Common myeloid progenitor, CD34-positive (primary cell): ENCODE measurements at regions of chr1 and their contacts with region 1.

Region 1: DNA sequence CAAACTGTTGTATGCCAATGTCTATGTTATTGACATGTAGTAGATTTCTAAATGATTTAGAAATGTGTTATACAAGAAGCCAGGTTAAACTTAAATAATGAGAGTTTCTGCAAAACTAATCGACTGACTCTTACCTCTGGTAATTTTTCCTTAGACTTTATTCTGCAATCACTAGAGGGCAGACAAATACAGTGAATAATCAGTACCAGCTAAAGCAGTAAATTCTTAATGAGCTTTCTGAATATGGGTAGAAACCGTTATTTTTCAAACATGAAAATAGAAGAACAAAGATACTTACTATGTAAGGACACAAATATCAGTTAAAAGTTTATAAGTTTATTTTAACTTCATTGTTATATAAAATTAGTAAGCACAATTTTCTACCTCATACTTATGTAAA is 97.9 kb upstream of the RGS1 start:
- DNase-seq: peak; percentile 45 to 73 (median 67)
- H3K4me3 ChIP-seq: no peak overlapping the region
- H3K27ac ChIP-seq: no peak overlapping the region
- H3K4me1 ChIP-seq: no peaks in the 10 kb centered on the region
- H3K27me3 ChIP-seq: no peaks in the 10 kb centered on the region

Region 2: DNA sequence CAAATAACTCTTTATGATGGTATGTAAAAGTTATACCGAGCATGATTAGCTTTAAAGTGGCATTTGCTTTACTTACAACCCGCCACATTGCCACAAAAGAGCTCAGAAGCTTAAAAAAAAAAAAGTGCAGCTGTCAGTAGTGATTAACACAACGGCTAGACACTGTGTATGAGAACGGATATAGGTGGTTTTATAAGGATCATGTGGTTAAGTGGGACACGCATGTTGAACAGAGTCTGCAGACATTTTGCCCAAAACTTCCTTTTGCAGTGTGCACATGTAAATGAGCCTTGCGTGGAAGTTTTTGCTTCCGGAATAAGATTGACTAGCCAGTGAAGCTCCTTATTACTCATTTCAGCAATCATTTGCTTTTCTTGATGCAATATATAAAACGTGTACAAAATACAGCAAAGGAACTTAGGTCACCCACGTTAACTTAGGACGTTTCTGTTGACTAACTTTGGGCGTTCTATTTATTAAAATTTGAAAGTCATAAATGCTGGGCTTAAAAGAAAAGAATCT is 39.2 kb after region 1 on chr1:
- CTCF ChIA-PET with region 1: interaction called, 14 read pairs
- POLR2A ChIA-PET with region 1: no interaction called
- DNase-seq: peak; percentile 95 to 98 (median 97)
- H3K4me3 ChIP-seq: peak overlapping the region in 6 of 7 experiments; percentile 14 to 43 (median 35)
- H3K27ac ChIP-seq: peak overlapping the region; percentile 27 to 78
- H3K4me1 ChIP-seq: peaks cover 17 to 51% (median 32%) of the 10 kb centered on the region in 4 experiments
- H3K27me3 ChIP-seq: no peaks in the 10 kb centered on the region

Region 3: DNA sequence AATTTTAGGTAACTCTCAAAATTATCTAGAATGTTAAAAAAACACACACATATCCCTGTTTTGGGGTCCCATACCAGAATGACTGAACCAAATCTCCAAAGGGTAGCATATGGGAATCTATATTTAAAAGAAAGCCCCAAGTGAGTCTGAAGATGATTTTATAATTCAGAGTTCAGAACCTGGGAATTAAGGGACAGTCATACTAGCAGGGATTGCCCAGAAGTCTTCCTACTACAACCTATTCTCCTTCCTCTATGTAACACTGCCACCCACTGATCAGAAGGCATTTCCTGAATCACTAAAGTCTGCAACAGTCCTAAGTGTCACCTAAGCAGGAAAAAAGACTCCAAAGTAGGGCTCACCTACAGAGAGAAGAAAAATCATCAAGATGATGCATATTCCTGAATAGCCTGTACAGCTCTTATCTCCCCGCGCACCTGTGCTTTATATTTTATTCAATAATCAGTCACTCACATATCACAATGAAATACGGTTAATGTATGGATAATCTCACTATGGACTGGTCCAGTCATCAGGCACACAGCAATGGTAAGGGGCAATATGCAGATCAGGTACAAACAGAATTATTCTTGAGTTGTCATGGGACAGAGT is 102.8 kb after region 1 on chr1:
- CTCF ChIA-PET with region 1: interaction called, 60 read pairs
- POLR2A ChIA-PET with region 1: interaction called, 5 read pairs
- DNase-seq: peak; percentile 50 to 59 (median 52)
- H3K4me3 ChIP-seq: no peak overlapping the region
- H3K27ac ChIP-seq: no peak overlapping the region
- H3K4me1 ChIP-seq: peaks cover 2 to 8% (median 6%) of the 10 kb centered on the region in 4 experiments
- H3K27me3 ChIP-seq: no peaks in the 10 kb centered on the region

Region 4: GRCh38 chr1:192609110-192610079 is 131.8 kb after region 1 on chr1:
- CTCF ChIA-PET with region 1: interaction called, 77 read pairs
- POLR2A ChIA-PET with region 1: no interaction called
- DNase-seq: peak; percentile 92 to 99 (median 98)
- H3K4me3 ChIP-seq: no peak overlapping the region
- H3K27ac ChIP-seq: peak overlapping the region; percentile 70 to 78
- H3K4me1 ChIP-seq: peaks cover 11 to 32% (median 23%) of the 10 kb centered on the region in 4 experiments
- H3K27me3 ChIP-seq: no peaks in the 10 kb centered on the region

Region 5: DNA sequence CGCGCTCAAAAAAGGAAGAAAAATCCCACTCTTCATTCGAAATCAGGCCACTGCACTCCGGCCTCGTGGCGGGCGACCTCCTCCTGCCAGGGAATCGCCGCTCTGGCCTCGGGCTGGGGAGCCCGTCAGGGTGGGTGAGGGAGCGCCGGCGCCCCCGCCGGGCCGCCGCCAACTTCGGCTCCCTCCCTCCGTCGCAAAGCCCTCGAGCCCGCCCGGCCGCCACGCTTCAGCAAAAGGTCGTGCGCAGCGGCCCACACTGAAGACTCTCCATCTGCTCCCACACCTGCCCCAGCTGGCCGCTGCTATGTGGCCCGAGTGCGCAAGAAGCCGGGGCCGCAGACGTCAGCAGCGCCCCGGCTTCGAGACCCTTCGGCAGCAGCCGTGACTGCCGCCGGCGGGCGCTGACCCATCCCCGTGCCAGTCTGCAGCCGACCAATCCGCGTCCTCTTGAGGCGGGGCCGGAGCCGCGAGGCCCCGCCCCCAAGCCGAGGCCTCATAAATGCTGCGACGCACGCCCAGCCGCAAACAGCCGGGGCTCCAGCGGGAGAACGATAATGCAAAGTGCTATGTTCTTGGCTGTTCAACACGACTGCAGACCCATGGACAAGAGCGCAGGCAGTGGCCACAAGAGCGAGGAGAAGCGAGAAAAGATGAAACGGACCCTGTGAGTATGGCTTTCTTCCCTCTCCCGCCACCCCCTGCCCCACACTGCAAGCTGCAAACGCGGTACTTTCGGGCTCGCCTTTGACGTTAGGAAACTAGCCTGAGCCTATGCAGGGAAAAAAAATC is 331.1 kb after region 1 on chr1 and contains the start of gene RGS2:
- CTCF ChIA-PET with region 1: interaction called, 26 read pairs
- POLR2A ChIA-PET with region 1: no interaction called
- DNase-seq: peak; percentile 87 to 92 (median 91)
- H3K4me3 ChIP-seq: peak within 1 kb of the TSS; percentile 76 to 100 (median 95)
- H3K27ac ChIP-seq: peak within 1 kb of the TSS in 1 of 2 experiments; percentile 59
- H3K4me1 ChIP-seq: peaks cover 21 to 43% (median 34%) of the 10 kb centered on the region in 4 experiments
- H3K27me3 ChIP-seq: peaks cover 0 to 4% (median 0%) of the 10 kb centered on the region in 5 experiments

Region 6: GRCh38 chr1:192904438-192904895 is 426.8 kb after region 1 on chr1:
- CTCF ChIA-PET with region 1: no interaction called
- POLR2A ChIA-PET with region 1: no interaction called
- DNase-seq: peak; percentile 5 to 81 (median 74)
- H3K4me3 ChIP-seq: peak overlapping the region in 4 of 7 experiments; percentile 31 to 72 (median 50)
- H3K27ac ChIP-seq: no peak overlapping the region
- H3K4me1 ChIP-seq: peaks cover 0 to 10% (median 3%) of the 10 kb centered on the region in 4 experiments
- H3K27me3 ChIP-seq: no peaks in the 10 kb centered on the region

Region 7: GRCh38 chr1:193019442-193020026 is 541.9 kb after region 1 on chr1:
- CTCF ChIA-PET with region 1: interaction called, 52 read pairs
- POLR2A ChIA-PET with region 1: no interaction called
- DNase-seq: peak; percentile 56 to 77 (median 72)
- H3K4me3 ChIP-seq: no peak overlapping the region
- H3K27ac ChIP-seq: no peak overlapping the region
- H3K4me1 ChIP-seq: no peaks in the 10 kb centered on the region
- H3K27me3 ChIP-seq: no peaks in the 10 kb centered on the region

Region 8: GRCh38 chr1:193031438-193031837 is 553.8 kb after region 1 on chr1:
- CTCF ChIA-PET with region 1: interaction called, 13 read pairs
- POLR2A ChIA-PET with region 1: no interaction called
- DNase-seq: peak; percentile 12 to 48 (median 38)
- H3K4me3 ChIP-seq: no peak overlapping the region
- H3K27ac ChIP-seq: no peak overlapping the region
- H3K4me1 ChIP-seq: no peaks in the 10 kb centered on the region
- H3K27me3 ChIP-seq: no peaks in the 10 kb centered on the region